Activated CD8-positive, alpha-beta T cell treated with anti-CD3 and anti-CD28 coated beads for 36 hours (primary cell): ENCODE measurements at regions of chr2 and their contacts with region 1.

Region 1: DNA sequence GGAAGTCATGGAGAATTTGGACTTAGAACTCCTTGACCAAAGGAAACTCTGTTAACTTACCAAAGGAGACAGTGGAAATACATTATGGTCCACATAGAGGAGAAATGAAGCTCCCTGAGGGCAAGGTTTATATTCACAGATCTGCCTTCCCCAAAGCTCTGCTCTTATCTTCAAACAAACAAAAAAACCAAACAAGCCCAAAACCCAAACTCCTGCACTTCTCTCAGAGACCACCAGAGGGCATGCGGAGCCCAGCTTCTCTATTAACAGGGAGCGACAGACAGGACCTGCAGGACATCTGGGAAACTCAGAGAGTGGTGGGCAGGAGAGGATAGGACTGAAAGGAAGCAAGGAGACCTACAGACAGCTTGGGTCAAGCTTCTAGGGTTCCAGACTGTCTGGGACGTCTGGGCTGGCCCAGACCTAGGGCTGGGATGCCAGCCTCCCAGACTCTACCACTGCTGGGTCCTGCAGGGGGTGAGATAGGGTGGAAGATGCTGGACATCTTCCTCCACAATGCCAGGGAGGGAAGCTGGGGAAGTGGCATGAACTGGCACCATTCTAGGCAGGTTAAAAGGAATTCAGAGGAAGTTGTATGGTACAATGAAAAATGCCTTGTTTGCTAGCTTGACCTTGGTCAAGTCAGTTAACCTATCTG is 4.0 kb upstream of the WNT10A start:
- DNase-seq: peak; percentile 84
- ATAC-seq: no peak
- H3K4me3 Mint-ChIP-seq: no peak overlapping the region
- H3K27ac Mint-ChIP-seq: no peak overlapping the region
- H3K4me1 Mint-ChIP-seq: peaks cover 51% of the 10 kb centered on the region
- H3K27me3 Mint-ChIP-seq: peaks cover 42% of the 10 kb centered on the region
- CTCF ChIP-seq: peak; percentile 98

Region 2: DNA sequence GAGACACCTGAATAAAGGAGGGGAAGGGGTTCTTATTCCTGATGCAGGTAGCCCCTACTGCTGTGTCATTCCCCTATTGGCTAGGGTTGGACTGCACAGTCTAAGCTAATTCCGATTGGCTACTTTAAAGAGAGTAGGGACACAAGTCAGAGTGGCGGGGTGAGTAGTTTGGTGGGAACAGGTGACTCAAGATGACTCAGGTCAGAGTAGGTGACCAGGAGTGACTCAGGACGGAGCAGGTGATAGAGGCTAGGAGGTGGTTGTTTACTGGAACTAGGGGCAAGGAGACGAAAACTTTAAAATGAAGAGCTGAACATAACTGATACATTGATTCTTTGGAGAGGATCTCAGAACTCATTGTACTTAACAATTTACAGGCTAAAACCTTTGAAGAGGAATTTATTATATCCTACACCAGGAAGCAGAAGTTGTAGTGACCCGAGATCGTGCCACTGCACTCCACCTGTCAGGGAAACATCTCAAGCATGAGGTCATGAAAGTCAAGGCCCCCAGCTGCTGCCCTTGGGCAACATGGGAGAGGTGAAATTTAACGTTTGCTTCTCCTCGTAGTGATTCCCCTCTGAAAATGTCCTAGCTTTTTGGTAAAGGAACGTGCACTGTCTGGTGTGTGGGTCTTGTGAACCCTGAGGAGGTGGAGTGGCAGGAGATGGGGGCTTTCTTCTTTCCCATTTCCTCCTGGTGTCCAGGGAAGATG is 99.3 kb before region 1 on chr2:
- CTCF ChIA-PET with region 1: no interaction called
- POLR2A ChIA-PET with region 1: no interaction called
- intact Hi-C with region 1: no loop called
- DNase-seq: no peak
- ATAC-seq: no peak
- H3K4me3 Mint-ChIP-seq: no peak overlapping the region
- H3K27ac Mint-ChIP-seq: no peak overlapping the region
- H3K4me1 Mint-ChIP-seq: peaks cover 5% of the 10 kb centered on the region
- H3K27me3 Mint-ChIP-seq: peaks cover 25% of the 10 kb centered on the region
- CTCF ChIP-seq: no peak

Region 3: DNA sequence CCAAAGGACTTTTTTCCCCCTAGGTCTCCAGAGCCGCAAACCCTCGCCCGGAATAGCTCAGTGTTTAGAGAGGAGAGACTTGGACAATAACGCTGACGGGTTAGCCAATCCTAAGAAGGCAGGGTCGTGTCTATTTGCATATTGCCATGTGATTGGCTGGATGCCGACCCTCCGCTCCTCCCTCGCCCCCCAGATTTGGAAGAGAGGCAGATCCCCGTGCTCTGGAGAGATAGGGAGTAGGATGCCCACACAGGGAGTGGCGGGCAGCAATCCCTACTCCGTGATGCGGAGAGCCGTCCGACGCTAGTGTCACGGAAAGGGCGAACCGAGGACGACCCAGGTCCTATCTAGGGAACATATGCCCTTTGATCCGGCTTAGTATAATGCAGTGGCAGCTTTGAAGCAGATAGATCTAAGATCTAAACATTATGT is 15.7 kb before region 1 on chr2:
- CTCF ChIA-PET with region 1: interaction called, 30 read pairs
- POLR2A ChIA-PET with region 1: no interaction called
- intact Hi-C with region 1: no loop called
- DNase-seq: peak; percentile 21
- ATAC-seq: peak; percentile 35
- H3K4me3 Mint-ChIP-seq: no peak overlapping the region
- H3K27ac Mint-ChIP-seq: no peak overlapping the region
- H3K4me1 Mint-ChIP-seq: peaks cover 10% of the 10 kb centered on the region
- H3K27me3 Mint-ChIP-seq: peaks cover 68% of the 10 kb centered on the region
- CTCF ChIP-seq: no peak

Region 4: DNA sequence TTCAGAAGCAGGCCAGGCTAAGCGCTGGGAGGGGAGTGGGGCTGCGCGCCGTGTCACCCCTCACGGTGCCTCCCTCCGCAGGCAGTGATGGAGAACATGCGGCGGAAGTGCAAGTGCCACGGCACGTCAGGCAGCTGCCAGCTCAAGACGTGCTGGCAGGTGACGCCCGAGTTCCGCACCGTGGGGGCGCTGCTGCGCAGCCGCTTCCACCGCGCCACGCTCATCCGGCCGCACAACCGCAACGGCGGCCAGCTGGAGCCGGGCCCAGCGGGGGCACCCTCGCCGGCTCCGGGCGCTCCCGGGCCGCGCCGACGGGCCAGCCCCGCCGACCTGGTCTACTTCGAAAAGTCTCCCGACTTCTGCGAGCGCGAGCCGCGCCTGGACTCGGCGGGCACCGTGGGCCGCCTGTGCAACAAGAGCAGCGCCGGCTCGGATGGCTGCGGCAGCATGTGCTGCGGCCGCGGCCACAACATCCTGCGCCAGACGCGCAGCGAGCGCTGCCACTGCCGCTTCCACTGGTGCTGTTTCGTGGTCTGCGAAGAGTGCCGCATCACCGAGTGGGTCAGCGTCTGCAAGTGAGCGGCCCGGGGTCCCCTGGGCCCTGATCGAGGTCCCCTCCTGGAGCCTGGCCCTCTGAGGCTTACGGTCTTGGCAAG is 16.1 kb after region 1 on chr2:
- CTCF ChIA-PET with region 1: interaction called, 1,101 read pairs
- POLR2A ChIA-PET with region 1: interaction called, 284 read pairs
- intact Hi-C with region 1: loop called (anchors 1 kb)
- DNase-seq: peak; percentile 88
- ATAC-seq: peak; percentile 58
- H3K4me3 Mint-ChIP-seq: peak overlapping the region; percentile 79
- H3K27ac Mint-ChIP-seq: peak overlapping the region; percentile 89
- H3K4me1 Mint-ChIP-seq: peaks cover 51% of the 10 kb centered on the region
- H3K27me3 Mint-ChIP-seq: no peaks in the 10 kb centered on the region
- CTCF ChIP-seq: peak; percentile 52

Region 5: GRCh38 chr2:218908721-218909619 is 32.3 kb after region 1 on chr2:
- CTCF ChIA-PET with region 1: interaction called, 97 read pairs
- POLR2A ChIA-PET with region 1: interaction called, 7 read pairs
- intact Hi-C with region 1: no loop called
- DNase-seq: peak; percentile 97
- ATAC-seq: peak; percentile 97
- H3K4me3 Mint-ChIP-seq: peak overlapping the region; percentile 87
- H3K27ac Mint-ChIP-seq: peak overlapping the region; percentile 88
- H3K4me1 Mint-ChIP-seq: peaks cover 9% of the 10 kb centered on the region
- H3K27me3 Mint-ChIP-seq: peaks cover 17% of the 10 kb centered on the region
- CTCF ChIP-seq: no peak

Region 6: DNA sequence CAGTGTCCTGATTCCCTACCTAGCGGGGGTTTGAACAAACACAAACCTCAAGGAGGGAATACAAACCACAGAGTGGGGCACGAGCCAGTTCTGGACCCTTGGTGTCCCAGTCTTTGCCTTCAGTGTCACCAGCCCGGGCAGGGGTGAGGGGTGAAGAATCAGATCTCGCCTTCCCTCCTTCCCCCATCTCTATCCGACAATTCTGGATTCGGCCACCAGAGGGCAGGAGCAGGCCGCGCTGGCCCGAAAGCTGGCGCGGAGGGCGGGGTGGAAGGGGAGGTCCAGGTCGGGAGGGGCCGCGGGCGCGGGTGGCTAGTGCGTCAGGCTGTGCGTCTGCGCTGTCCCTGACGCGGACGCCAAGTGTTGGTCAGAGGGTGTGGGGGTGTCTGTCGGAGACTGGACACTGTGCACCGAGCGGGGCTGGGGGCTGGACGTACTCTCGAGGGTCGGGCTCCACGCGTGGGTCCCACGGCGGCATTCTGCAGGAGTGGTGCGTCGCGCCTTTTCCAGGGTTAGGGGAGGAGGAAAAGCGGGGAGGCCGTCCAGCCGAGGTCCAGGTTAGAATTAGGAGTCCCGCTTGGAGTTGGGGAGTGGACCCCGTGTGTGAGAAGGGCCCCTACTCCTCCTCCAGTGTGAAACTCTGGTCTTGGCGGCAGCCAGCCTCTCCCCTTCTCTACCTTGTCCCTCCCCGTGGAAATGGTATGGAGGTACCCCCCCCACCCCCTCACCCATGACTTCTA is 119.5 kb after region 1 on chr2:
- CTCF ChIA-PET with region 1: interaction called, 17 read pairs
- POLR2A ChIA-PET with region 1: no interaction called
- intact Hi-C with region 1: no loop called
- DNase-seq: peak; percentile 90
- ATAC-seq: peak; percentile 91
- H3K4me3 Mint-ChIP-seq: no peak overlapping the region
- H3K27ac Mint-ChIP-seq: no peak overlapping the region
- H3K4me1 Mint-ChIP-seq: peaks cover 4% of the 10 kb centered on the region
- H3K27me3 Mint-ChIP-seq: peaks cover 75% of the 10 kb centered on the region
- CTCF ChIP-seq: peak; percentile 93